Naive thymus-derived CD4-positive, alpha-beta T cell (primary cell): ENCODE measurements at regions of chr1 and their contacts with region 1.

Region 1: DNA sequence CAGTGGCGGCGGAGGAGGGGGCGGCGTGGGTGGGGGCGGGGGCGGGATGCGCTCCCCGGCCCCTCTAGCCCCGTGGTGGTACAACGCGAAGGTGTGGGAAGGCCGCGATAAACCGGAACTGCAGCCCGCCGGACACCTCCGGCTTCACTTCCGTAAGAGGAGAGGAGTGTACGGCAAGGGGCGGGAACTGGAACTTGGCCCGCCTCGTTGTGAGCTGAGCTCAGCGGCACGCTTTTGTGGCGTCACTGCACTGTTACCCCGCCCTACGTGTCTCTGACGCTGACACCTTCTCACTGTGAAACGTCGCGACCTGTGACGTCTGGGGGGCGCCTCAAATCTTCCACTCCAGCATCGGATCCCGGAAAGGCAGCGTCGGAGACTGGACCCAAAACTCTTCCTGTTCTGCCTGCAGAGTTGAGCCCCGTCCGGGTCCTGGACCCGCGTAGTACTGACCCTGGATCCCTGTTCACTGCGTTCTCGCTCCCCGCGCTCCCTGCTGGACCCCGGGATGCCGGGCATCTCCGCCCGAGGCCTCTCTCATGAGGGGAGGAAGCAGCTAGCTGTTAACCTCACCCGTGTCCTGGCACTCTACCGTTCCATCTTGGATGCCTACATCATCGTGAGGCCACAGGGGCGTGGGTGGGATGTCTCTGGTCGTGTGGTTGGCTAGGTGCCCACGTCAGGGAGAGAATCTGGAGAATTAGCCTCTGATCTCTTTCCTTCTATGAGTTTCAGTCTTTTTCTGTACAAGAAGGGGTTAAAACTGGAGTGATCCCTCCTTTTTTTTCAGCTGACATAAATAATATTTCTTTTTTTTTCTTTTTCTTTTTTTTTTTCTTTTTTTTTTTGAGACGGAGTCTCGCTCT is at the start of gene ISG20L2:
- DNase-seq: peak; percentile 76 to 98 (median 94)
- ATAC-seq: peak; percentile 96
- H3K4me3 ChIP-seq: peak within 1 kb of the TSS; percentile 97
- H3K4me3 Mint-ChIP-seq: no peak within 1 kb of the TSS
- H3K27ac ChIP-seq: peak within 1 kb of the TSS; percentile 95
- H3K27ac Mint-ChIP-seq: peak within 1 kb of the TSS in 4 of 9 donors; percentile 94 to 99 (median 98)
- H3K4me1 ChIP-seq: peaks cover 38 to 40% of the 10 kb centered on the region in 2 donors
- H3K4me1 Mint-ChIP-seq: peaks cover 18 to 35% (median 22%) of the 10 kb centered on the region in 7 donors
- H3K27me3 ChIP-seq: no peaks in the 10 kb centered on the region
- H3K27me3 Mint-ChIP-seq: no peaks in the 10 kb centered on the region
- total RNA-seq, gene ISG20L2: 44.7 to 59.9 (median 53.9) TPM

Region 2: DNA sequence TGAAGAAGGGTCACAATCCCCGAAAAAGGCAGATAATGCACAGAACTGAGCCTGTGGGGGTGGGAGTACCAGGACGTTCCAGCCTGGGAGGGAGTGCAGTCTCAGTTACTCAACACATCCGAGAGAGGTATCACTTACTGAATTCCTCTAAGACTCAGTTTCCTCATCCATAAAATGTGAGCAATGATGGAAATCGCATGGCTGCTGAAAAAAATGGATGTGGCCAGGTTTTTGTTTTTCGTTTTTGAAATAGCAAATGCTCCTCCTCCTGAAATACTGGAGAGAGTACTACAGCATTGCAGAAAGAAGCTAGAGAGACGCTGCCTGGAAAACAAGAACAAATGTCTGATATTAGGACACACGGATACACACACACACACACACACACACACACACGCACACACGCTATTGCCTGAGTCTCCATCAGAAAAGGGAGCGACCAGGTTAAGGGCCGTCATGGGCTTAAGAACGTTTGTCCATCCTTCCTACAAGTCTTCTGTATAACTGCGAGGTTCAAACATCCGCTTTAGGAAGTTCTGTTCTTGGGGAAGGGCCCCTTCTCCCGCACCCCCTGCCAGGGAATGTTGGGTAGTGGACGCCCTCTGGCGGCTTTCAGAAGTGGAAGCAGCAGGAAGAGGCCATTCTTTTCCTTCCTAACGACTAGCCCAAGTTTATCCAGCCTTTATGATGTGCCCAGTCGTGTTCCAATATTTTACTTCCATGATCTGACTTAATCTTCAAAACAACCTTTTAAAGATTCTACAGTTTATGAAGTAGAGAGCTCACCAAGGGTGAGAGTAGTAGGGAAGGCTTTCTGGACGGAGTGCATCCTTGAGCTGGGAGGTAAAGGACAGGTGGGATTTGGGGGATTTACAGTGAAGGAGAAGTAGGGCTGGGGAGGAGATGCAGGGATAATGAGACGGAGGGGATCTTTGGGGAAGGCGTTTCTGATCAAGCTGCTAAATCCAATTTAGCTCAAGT is 50.9 kb before region 1 on chr1:
- CTCF ChIA-PET with region 1: interaction called, 12 read pairs
- POLR2A ChIA-PET with region 1: interaction called, 21 read pairs
- intact Hi-C with region 1: no loop called
- DNase-seq: peak in 2 of 9 donors; percentile 23 to 34
- ATAC-seq: peak; percentile 61
- H3K4me3 ChIP-seq: no peak overlapping the region
- H3K4me3 Mint-ChIP-seq: peak overlapping the region in 9 of 10 donors; percentile 6 to 70 (median 49)
- H3K27ac ChIP-seq: no peak overlapping the region
- H3K27ac Mint-ChIP-seq: peak overlapping the region in 1 of 9 donors; percentile 1
- H3K4me1 ChIP-seq: peaks cover 3 to 6% of the 10 kb centered on the region in 2 donors
- H3K4me1 Mint-ChIP-seq: peaks cover 8 to 17% (median 14%) of the 10 kb centered on the region in 7 donors
- H3K27me3 ChIP-seq: peaks cover 11 to 20% of the 10 kb centered on the region in 2 donors
- H3K27me3 Mint-ChIP-seq: peaks cover 50 to 82% (median 60%) of the 10 kb centered on the region in 5 donors

Region 3: DNA sequence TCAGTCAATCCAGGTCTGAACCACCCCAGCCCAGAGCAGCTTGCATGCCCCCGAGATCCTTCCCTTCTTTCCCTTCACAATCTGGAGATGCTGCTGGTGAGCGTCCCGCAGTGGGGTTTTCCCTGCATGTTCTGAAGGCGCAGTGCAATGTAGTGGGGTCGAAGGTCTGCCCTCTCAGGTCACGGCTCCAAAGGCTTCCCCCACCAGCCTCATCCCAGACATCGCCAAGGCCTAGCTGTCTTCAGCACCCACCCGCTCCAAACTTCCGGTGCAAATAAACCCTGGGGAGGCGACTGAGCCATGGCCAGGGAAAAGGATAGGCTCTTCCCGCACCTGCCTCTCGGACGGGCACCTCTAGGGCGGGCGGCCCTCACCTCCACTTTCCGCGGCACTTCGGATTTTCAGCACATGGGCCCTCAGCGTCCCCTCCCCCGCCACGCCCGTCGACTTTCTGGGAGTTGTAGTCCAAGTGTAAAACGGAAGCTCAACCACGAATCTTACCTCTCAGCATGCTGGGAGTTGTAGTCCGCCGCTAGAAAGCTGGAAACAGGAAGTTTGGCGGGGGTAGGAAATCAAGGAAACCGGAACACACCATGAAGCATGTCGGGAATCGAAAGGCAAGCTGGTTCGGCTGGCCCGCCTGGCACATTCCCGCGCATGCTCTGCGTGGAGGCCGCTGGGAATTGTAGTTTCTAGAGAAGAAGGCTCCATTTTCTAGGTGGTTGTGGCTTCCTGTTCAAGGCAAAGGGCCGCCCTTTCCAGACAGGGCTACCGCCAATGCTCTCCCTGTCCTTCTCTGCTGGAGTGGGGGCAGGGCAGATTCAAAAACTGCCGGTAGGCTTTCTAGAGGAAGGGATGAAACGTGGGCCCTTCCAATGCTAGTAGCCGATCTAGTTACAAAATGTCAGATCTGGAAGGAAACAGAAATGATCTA is 12.1 kb after region 1 on chr1 and contains the start of gene MRPL24:
- CTCF ChIA-PET with region 1: interaction called, 10 read pairs
- POLR2A ChIA-PET with region 1: interaction called, 77 read pairs
- intact Hi-C with region 1: loop called (anchors 1 kb)
- DNase-seq: peak; percentile 84 to 99 (median 98)
- ATAC-seq: peak; percentile 95
- H3K4me3 ChIP-seq: peak within 1 kb of the TSS; percentile 79
- H3K4me3 Mint-ChIP-seq: peak within 1 kb of the TSS; percentile 94 to 99 (median 98)
- H3K27ac ChIP-seq: peak within 1 kb of the TSS; percentile 90
- H3K27ac Mint-ChIP-seq: peak within 1 kb of the TSS; percentile 86 to 99 (median 98)
- H3K4me1 ChIP-seq: peaks cover 17 to 20% of the 10 kb centered on the region in 2 donors
- H3K4me1 Mint-ChIP-seq: peaks cover 23 to 50% (median 40%) of the 10 kb centered on the region in 7 donors
- H3K27me3 ChIP-seq: no peaks in the 10 kb centered on the region
- H3K27me3 Mint-ChIP-seq: no peaks in the 10 kb centered on the region
- total RNA-seq, gene MRPL24: 19.1 to 68.9 (median 47.2) TPM

Region 4: GRCh38 chr1:156767101-156767878 is 38.5 kb after region 1 on chr1 and contains the start of gene PRCC:
- CTCF ChIA-PET with region 1: interaction called, 12 read pairs
- POLR2A ChIA-PET with region 1: interaction called, 74 read pairs
- intact Hi-C with region 1: loop called (anchors 1 kb)
- DNase-seq: peak; percentile 83 to 100 (median 98)
- ATAC-seq: peak; percentile 94
- H3K4me3 ChIP-seq: peak within 1 kb of the TSS; percentile 89
- H3K4me3 Mint-ChIP-seq: no peak within 1 kb of the TSS
- H3K27ac ChIP-seq: peak within 1 kb of the TSS; percentile 98
- H3K27ac Mint-ChIP-seq: peak within 1 kb of the TSS in 3 of 9 donors; percentile 13 to 91 (median 88)
- H3K4me1 ChIP-seq: peaks cover 23 to 36% of the 10 kb centered on the region in 2 donors
- H3K4me1 Mint-ChIP-seq: peaks cover 35 to 46% (median 37%) of the 10 kb centered on the region in 7 donors
- H3K27me3 ChIP-seq: no peaks in the 10 kb centered on the region
- H3K27me3 Mint-ChIP-seq: no peaks in the 10 kb centered on the region
- total RNA-seq, gene PRCC: 53.2 to 88.9 (median 61.7) TPM

Region 5: DNA sequence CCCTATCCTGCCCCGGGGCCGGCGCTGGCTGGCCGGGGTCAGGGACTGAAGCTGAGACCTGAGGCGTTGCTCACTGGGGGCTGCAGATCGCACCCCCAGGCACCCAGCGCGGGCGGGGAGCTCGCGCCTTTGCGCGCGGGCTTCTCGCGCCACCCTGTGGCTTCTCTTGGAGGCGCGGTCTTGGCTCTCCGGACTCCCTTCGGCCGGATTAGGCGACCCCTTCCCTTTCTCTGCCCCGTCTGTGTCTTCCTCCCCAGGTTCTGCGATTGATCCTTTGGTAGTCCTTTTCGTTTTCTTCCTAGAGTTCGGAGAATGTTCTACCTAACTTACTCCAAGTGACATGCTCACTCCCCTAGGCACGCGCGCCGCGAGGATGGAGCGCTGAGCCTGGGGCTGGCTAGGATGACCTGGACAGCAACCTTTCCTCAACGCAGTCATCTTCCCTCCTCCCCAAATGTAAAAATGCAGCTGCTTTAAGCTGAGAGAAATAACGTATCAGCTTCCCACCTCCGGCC is 131.3 kb after region 1 on chr1:
- CTCF ChIA-PET with region 1: interaction called, 41 read pairs
- POLR2A ChIA-PET with region 1: interaction called, 8 read pairs
- intact Hi-C with region 1: loop called (anchors 1 kb)
- DNase-seq: peak; percentile 21 to 77 (median 45)
- ATAC-seq: peak; percentile 71
- H3K4me3 ChIP-seq: peak overlapping the region; percentile 68
- H3K4me3 Mint-ChIP-seq: peak overlapping the region; percentile 70 to 92 (median 83)
- H3K27ac ChIP-seq: no peak overlapping the region
- H3K27ac Mint-ChIP-seq: peak overlapping the region in 5 of 9 donors; percentile 13 to 73 (median 59)
- H3K4me1 ChIP-seq: peaks cover 5 to 20% of the 10 kb centered on the region in 2 donors
- H3K4me1 Mint-ChIP-seq: peaks cover 17 to 64% (median 24%) of the 10 kb centered on the region in 7 donors
- H3K27me3 ChIP-seq: peaks cover 12 to 31% of the 10 kb centered on the region in 2 donors
- H3K27me3 Mint-ChIP-seq: peaks cover 43 to 53% (median 51%) of the 10 kb centered on the region in 5 donors